Dendritic cell treated with granulocyte-macrophage colony-stimulating factor and Interleukin-4, amounts not matched to agents 40 ng/mL and 50 ng/mL, for 4 days (primary cell): ENCODE measurements at regions of chr2 and their contacts with region 1.

Region 1: GRCh38 chr2:59301466-59302402 is 1060.6 kb upstream of the FANCL start:
- H3K4me3 Mint-ChIP-seq: no peak overlapping the region
- H3K27ac Mint-ChIP-seq: no peak overlapping the region
- H3K4me1 Mint-ChIP-seq: no peaks in the 10 kb centered on the region
- H3K27me3 Mint-ChIP-seq: no peaks in the 10 kb centered on the region

Region 2: DNA sequence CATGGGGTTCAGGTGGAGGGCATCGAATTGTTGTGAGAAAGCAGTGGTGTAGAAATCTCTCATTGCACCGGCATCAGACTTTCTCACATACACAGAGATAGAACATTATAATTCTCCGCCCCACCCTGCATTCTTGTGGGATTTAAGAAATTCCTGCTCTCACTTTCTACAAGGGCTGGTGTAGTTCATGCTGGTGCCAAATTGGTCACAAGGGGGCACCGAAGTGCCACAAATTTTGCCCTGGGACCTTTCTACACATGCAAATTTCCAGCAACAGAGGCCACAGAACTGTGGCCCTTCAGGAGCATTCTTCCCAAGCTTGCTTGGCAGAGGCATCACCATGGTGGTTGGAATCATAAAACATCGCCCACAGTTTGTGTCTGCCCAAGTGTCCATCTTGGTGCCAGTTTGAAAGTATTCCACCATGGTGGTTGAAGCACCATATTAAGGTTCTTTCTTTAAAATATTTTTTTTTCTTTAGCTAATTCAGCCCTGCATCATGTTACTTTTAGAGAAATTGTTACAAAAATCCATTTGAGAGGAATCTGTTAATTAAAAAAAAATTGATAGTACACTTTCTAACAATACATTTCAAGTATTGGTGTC is 539.5 kb before region 1 on chr2:
- intact Hi-C with region 1: loop called (anchors 10 kb)
- H3K4me3 Mint-ChIP-seq: no peak overlapping the region
- H3K27ac Mint-ChIP-seq: no peak overlapping the region
- H3K4me1 Mint-ChIP-seq: peaks cover 14% of the 10 kb centered on the region
- H3K27me3 Mint-ChIP-seq: no peaks in the 10 kb centered on the region

Region 3: GRCh38 chr2:59282374-59283057 is 19.2 kb before region 1 on chr2:
- intact Hi-C with region 1: no loop called
- H3K4me3 Mint-ChIP-seq: no peak overlapping the region
- H3K27ac Mint-ChIP-seq: no peak overlapping the region
- H3K4me1 Mint-ChIP-seq: peaks cover 4% of the 10 kb centered on the region
- H3K27me3 Mint-ChIP-seq: no peaks in the 10 kb centered on the region

Region 4: GRCh38 chr2:59389240-59389639 is 87.5 kb after region 1 on chr2:
- intact Hi-C with region 1: no loop called
- H3K4me3 Mint-ChIP-seq: no peak overlapping the region
- H3K27ac Mint-ChIP-seq: no peak overlapping the region
- H3K4me1 Mint-ChIP-seq: no peaks in the 10 kb centered on the region
- H3K27me3 Mint-ChIP-seq: no peaks in the 10 kb centered on the region

Region 5: GRCh38 chr2:59462422-59463197 is 160.9 kb after region 1 on chr2:
- intact Hi-C with region 1: no loop called
- H3K4me3 Mint-ChIP-seq: no peak overlapping the region
- H3K27ac Mint-ChIP-seq: no peak overlapping the region
- H3K4me1 Mint-ChIP-seq: no peaks in the 10 kb centered on the region
- H3K27me3 Mint-ChIP-seq: no peaks in the 10 kb centered on the region

Region 6: GRCh38 chr2:60152226-60152833 is 850.6 kb after region 1 on chr2:
- intact Hi-C with region 1: loop called (anchors 2 kb)
- H3K4me3 Mint-ChIP-seq: no peak overlapping the region
- H3K27ac Mint-ChIP-seq: no peak overlapping the region
- H3K4me1 Mint-ChIP-seq: peaks cover 6% of the 10 kb centered on the region
- H3K27me3 Mint-ChIP-seq: no peaks in the 10 kb centered on the region

Region 7: DNA sequence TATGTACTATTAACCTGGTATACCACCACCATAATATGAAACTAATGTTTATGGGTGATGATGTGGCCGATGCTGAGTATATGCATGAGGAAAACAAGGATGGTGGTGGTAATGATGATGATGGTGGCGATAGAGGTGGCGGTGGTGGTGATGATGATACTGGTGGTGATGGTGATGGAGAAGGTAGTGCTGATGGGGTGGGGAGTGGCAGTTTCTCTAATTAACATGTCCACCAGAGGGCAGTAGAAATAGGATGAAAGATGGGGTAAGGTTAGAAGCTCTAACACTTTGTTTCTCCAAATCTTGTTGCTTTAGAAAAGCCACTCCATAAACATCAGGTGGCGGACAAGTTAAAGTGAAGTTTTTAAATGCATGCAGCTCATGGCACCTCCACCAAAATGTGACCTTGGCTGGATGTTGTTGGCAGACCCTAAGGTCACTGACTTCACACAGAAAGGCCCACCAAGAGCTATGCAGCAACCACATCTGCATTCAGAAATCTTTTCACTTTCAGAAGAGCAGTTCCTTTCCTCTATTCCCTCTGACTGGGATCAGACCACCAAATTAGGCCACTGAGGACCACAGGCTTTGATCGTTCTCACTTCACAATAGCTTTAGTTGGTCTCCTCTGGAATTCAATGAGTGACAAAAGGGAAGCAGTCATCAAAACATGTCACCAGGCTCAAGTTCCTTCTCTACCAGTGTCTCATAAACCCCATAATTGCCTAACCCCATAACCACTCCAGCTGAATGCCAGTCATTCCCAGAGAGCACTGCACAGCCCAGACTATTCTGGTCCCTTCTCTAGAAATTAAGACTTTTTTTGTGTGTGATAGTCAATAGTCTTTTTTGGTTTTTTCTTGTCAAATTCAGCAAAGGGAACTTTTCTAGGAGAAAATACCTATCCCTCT is 1259.3 kb after region 1 on chr2:
- intact Hi-C with region 1: loop called (anchors 5 kb)
- H3K4me3 Mint-ChIP-seq: no peak overlapping the region
- H3K27ac Mint-ChIP-seq: no peak overlapping the region
- H3K4me1 Mint-ChIP-seq: peaks cover 38% of the 10 kb centered on the region
- H3K27me3 Mint-ChIP-seq: peaks cover 6% of the 10 kb centered on the region

Region 8: DNA sequence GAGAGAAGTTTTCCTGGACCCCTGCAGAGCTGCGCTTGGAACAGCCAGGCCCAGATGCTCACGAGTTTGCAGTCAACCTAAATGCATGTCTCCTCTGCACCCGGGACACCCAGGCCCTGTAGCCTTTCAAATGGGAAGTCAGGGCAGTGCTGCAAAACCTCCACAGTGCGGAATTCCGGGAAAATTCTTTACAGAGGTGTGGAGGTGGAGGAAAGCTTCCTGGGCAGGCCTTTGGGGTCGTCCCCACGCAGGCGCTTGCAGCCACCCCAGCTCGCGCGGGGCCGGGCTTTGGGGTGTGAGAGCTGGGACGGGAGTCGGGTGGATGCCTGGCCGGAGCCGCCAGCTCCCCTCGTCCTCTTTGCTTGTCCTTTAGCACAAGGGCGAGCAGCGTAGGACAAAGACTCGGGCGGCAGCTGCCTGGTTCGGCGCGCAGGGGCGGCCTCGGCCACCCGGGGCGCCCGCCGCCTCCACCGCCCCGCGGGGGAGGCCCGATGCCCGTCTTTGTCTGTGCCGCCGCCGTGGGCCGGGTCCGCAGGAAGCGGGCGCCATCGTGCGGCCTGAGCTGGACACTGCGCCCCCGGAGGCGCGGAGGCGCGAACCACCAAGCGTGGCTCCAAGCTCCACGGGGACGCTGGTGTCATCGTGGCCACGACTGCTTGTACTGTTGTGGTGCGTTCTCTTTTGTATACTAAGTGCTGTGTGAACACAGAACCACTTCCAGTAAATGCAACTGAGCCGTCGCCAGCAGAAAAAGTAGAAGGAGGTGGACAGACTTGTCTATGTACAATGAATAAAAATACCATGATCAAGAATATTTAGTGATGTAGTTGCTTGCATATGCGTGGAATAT is 1279.9 kb after region 1 on chr2:
- intact Hi-C with region 1: loop called (anchors 5 kb)
- H3K4me3 Mint-ChIP-seq: peak overlapping the region; percentile 67
- H3K27ac Mint-ChIP-seq: peak overlapping the region; percentile 33
- H3K4me1 Mint-ChIP-seq: no peaks in the 10 kb centered on the region
- H3K27me3 Mint-ChIP-seq: peaks cover 16% of the 10 kb centered on the region